Heart left ventricle (tissue), 16 donors: ENCODE measurements at regions of chr9 and their contacts with region 1.

Region 1: DNA sequence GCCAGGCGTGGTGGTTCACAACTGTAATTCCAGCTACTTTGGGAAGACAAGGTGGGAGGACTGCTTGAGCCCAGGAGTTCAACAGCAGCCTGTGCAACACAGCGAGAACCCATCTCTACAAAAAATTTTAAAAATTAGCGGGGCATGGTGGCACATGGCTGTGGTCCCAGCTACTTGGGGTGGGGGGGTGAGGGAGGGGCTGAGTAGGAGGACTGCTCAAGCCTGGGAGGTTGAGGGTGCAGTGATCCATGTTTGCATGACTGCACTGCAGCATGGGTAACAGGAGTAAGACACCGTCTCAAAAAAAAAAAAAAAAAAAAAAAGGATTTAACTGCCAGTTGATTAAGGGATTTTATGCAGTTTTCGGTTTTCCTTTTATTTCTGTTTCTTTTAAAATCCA is 65.0 kb downstream of the PTBP3 start:
- DNase-seq: no peak
- ATAC-seq: no peak
- H3K4me3 ChIP-seq: no peak overlapping the region
- H3K27ac ChIP-seq: no peak overlapping the region
- H3K4me1 ChIP-seq: peaks cover 0 to 15% (median under 1%) of the 10 kb centered on the region in 12 donors
- H3K27me3 ChIP-seq: no peaks in the 10 kb centered on the region
- CTCF ChIP-seq: no peak
- POLR2A ChIP-seq: no peak

Region 2: GRCh38 chr9:112097712-112098688 is 170.4 kb before region 1 on chr9:
- intact Hi-C with region 1: no loop called
- DNase-seq: peak in 4 of 5 donors; percentile 47 to 68 (median 54)
- ATAC-seq: peak; percentile 42 to 86 (median 82)
- H3K4me3 ChIP-seq: no peak overlapping the region
- H3K27ac ChIP-seq: no peak overlapping the region
- H3K4me1 ChIP-seq: peaks cover 0 to 53% (median 0%) of the 10 kb centered on the region in 12 donors
- H3K27me3 ChIP-seq: no peaks in the 10 kb centered on the region
- CTCF ChIP-seq: peak; percentile 79 to 95 (median 90)
- POLR2A ChIP-seq: no peak

Region 3: GRCh38 chr9:112249277-112249676 is 19.1 kb before region 1 on chr9:
- intact Hi-C with region 1: no loop called
- DNase-seq: no peak
- ATAC-seq: no peak
- H3K4me3 ChIP-seq: no peak overlapping the region
- H3K27ac ChIP-seq: peak overlapping the region in 1 of 12 donors; percentile 10
- H3K4me1 ChIP-seq: peaks cover 0 to 8% (median 0%) of the 10 kb centered on the region in 12 donors
- H3K27me3 ChIP-seq: no peaks in the 10 kb centered on the region
- CTCF ChIP-seq: no peak
- POLR2A ChIP-seq: no peak

Region 4: DNA sequence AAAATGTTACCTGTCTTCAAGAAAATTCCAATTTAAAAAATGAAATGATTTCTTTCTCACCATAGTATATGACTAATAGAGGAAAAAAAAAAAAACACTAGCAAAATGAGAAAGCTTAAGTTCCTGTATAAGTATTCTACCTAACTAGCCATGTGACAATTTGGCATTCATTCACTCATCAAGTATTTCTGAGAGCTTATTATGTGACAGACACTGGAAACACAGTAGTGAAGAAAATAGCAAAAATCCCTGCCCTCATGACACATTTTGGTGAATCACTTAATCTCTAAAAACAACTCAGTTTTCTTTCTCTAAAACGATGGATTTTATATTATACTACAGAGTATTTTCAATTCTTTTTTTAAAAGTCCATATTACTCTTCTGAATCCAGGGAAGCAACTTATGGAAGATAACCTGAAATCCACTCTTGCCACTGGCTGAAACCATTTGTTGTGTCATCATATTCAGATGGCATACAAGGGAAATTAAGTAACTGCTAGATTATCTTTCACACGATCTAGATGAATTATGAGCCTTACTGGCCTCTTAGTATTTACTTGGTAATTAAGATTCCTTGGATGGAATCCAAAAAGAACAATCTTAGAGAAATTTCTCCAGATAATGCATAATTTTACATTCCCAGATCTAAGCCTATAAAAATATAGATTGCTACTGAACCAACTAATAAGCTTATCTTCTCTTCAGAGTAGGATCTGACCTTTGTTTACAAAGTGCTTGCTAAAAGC is 59.5 kb after region 1 on chr9:
- intact Hi-C with region 1: loop called in 1 of 10 experiments (anchors 10 kb)
- DNase-seq: no peak
- ATAC-seq: no peak
- H3K4me3 ChIP-seq: no peak overlapping the region
- H3K27ac ChIP-seq: no peak overlapping the region
- H3K4me1 ChIP-seq: peaks cover 0 to 58% (median 14%) of the 10 kb centered on the region in 12 donors
- H3K27me3 ChIP-seq: no peaks in the 10 kb centered on the region
- CTCF ChIP-seq: no peak
- POLR2A ChIP-seq: no peak

Region 5: DNA sequence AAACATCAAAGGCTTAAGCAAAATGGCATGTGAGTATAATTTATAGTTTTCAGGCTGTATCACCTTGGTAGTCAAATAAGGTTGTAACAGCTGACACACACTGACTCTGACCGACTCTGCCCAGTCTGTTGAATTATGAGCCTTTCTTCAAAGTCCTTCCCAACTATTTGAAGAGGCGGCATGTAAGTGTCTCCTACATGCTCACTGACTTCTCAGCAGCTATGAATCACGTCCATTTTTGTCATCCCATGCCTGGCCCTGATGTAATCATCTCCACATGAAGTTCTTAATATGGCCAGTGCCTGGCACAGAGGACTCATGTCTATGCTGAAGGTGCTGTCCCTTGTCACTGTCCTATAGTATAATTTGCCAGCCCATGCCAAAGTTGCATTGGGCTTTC is 70.1 kb after region 1 on chr9:
- intact Hi-C with region 1: no loop called
- DNase-seq: no peak
- ATAC-seq: peak in 1 of 4 donors; percentile 15
- H3K4me3 ChIP-seq: no peak overlapping the region
- H3K27ac ChIP-seq: no peak overlapping the region
- H3K4me1 ChIP-seq: peaks cover 0 to 9% (median 1%) of the 10 kb centered on the region in 12 donors
- H3K27me3 ChIP-seq: no peaks in the 10 kb centered on the region
- CTCF ChIP-seq: no peak
- POLR2A ChIP-seq: no peak

Region 6: DNA sequence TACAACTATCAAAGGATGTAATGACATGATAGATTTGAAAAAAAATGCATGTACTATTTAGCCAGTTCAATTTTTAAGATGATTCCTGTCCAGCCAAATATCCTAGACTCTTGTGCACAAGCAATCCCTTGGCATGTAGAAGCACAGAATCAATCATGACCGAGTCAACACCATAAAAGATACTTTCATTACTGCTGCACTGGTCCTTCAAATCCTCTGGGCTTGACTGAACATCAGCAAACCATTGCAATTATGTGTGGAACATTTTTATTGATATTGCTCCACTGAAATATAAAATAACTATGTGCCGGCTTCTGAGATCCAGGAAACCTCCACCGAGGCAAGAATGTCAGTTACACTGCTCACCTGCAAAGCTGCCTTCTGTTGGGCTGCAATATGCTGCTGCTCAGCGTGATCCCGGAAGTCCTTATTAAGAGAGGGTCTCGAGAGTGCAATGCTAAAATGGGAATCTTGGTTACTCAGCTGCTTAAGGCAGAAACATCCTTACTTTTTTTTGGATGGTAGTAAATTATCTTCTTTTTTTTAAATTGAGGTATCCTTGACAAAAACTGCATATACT is 420.8 kb after region 1 on chr9:
- intact Hi-C with region 1: no loop called
- DNase-seq: no peak
- ATAC-seq: no peak
- H3K4me3 ChIP-seq: no peak overlapping the region
- H3K27ac ChIP-seq: no peak overlapping the region
- H3K4me1 ChIP-seq: no peaks in the 10 kb centered on the region
- H3K27me3 ChIP-seq: no peaks in the 10 kb centered on the region
- CTCF ChIP-seq: no peak
- POLR2A ChIP-seq: no peak